ENCODE measurements at regions of chr4 and their contacts with region 1.

Region 1: GRCh38 chr4:182806259-182807252 is 110.6 kb downstream of the DCTD start:
- DNase-seq: peak; percentile 50
- H3K4me3 Mint-ChIP-seq: peak overlapping the region; percentile 62
- H3K27ac Mint-ChIP-seq: no peak overlapping the region
- H3K4me1 Mint-ChIP-seq: no peaks in the 10 kb centered on the region
- H3K27me3 Mint-ChIP-seq: peaks cover 16% of the 10 kb centered on the region

Region 2: DNA sequence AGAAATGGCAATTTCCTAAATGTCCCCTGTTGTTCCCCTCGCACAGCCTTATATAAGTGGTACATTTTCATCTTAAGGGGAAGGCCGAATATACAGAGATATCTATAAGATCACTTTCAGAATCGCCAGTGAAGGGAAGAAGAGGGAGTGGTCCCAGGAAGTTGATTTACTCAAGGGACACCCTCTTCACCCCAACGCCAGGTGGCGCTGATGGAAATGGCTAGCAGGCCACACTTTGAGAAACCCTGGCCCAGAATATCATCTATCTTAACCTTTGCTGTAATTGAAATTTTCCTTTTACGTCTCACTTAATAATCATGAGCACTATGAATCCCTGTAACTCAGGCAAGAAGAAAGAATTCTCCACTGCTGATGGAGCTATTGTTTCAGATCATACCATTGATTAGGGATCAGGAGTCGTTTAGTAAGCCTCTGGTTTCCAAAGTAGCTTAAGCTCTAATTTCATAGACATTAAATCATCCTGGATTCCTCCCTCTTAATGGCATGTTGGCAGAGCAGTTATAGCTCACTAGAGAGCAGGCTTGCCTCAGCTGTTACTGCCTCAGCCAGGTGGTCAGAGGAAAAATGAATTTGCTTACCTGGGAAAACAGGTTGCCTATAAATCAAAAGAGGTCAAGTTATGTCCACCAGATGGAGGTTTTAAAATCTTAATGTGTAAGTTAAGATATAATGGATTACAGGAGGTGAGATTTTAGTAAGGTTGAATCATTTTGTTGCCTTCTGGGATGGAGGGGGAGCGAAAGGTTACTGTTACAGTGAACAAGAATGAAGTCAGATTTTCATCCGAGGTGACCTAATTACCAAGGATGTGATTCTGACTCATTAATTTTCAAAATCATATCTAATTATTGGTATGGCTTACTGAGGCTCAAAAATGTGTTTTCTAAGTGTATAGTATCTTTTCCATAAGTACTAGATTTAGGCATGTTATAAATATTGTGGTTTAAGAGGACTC is 1504.5 kb before region 1 on chr4:
- intact Hi-C with region 1: loop called (anchors 5 kb)
- DNase-seq: no peak
- H3K4me3 Mint-ChIP-seq: no peak overlapping the region
- H3K27ac Mint-ChIP-seq: no peak overlapping the region
- H3K4me1 Mint-ChIP-seq: no peaks in the 10 kb centered on the region
- H3K27me3 Mint-ChIP-seq: no peaks in the 10 kb centered on the region

Region 3: DNA sequence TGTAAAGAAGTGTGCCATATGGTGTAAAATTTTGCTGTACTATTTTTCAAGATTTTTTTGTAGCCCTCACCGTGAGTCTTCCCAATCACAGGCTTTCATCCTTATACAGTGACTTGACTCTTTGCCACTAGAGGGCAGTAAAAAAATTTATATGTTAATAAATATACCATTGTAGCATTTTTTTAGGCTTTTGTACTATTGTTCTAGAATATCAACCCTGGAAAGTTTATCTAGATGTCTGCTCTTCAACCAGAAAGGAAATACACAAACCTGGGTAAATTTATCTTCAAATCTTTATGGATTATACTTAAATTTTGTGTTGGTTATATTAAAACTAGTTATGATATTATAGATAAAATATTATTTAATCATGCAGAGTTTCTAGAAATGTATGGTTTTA is 328.1 kb before region 1 on chr4:
- intact Hi-C with region 1: loop called (anchors 1 kb)
- DNase-seq: no peak
- H3K4me3 Mint-ChIP-seq: no peak overlapping the region
- H3K27ac Mint-ChIP-seq: no peak overlapping the region
- H3K4me1 Mint-ChIP-seq: no peaks in the 10 kb centered on the region
- H3K27me3 Mint-ChIP-seq: no peaks in the 10 kb centered on the region

Region 4: DNA sequence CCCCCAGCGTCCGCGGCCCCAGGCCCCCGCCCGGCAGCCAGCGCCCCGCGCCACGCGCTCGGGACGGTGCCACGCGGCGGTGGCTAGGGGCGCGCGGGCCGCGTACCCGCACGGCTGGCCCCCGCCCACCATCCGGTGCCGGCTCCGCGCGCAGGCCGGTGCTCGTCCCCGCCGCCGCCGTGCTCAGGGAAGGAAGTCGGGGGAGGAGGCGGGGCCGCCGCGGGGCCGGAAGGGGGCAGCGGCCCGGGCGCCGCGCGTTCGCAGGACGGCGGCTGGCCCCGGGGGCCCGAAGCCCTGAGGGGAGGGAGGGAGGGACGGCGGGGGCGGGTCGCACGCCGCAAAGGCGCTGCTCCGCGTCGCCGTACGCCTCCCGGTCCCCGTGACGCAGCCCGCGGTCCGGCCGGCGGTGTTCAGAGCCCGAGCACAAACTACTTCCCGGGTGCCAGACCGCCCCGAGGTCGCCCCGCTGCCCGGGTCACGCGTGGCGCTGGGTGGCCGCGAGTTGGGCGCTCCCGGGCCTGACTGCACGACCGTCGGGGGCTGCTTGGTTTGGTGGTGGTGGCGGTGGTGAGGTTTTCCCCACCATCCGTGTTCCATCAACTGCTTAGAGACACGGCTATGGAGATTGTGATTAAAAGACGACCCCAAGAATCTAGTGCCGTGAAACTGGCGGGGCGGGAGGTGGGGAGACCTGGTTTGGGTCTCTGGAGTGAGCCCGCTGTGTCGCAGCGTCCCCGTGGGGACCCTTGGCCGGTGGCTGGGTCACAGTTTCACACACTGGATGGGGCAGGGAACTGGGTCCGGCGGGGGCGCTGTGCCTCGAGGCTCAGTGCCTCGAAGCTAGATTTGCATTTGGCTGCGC is 110.9 kb after region 1 on chr4 and contains the start of gene DCTD:
- intact Hi-C with region 1: loop called (anchors 2 kb)
- DNase-seq: peak; percentile 78
- H3K4me3 Mint-ChIP-seq: peak within 1 kb of the TSS; percentile 92
- H3K27ac Mint-ChIP-seq: peak within 1 kb of the TSS; percentile 97
- H3K4me1 Mint-ChIP-seq: peaks cover 50% of the 10 kb centered on the region
- H3K27me3 Mint-ChIP-seq: peaks cover 10% of the 10 kb centered on the region
- total RNA-seq, gene DCTD: 122 and 131 TPM in 2 replicates

Region 5: GRCh38 chr4:183261953-183262775 is 455.6 kb after region 1 on chr4:
- intact Hi-C with region 1: loop called (anchors 1 kb)
- DNase-seq: peak; percentile 56
- H3K4me3 Mint-ChIP-seq: no peak overlapping the region
- H3K27ac Mint-ChIP-seq: no peak overlapping the region
- H3K4me1 Mint-ChIP-seq: peaks cover 7% of the 10 kb centered on the region
- H3K27me3 Mint-ChIP-seq: peaks cover 5% of the 10 kb centered on the region

Region 6: DNA sequence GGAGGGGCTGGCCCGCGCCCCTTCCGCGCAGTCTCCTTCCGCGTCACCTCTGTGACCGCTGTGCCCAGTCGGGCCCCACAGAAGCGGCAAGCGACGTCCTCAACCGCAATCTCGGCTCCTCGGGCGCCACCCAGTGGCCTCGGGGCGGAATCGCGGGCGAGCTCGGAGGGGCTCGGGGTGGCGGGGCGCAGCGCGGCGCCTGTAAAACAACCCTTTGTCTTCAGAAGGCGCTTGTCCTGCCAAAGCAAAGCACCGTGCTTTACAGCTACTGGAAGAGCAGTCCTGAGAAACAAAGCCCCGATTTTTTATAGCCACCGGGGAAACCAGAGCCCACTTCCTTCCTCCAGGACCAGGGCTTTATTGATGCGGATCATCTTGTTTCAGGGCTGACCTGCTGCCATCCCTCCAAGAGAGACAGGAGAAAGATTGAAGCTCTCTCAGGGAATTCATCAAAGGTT is 600.6 kb after region 1 on chr4:
- intact Hi-C with region 1: loop called (anchors 10 kb)
- DNase-seq: peak; percentile 82
- H3K4me3 Mint-ChIP-seq: peak overlapping the region; percentile 81
- H3K27ac Mint-ChIP-seq: no peak overlapping the region
- H3K4me1 Mint-ChIP-seq: peaks cover 8% of the 10 kb centered on the region
- H3K27me3 Mint-ChIP-seq: peaks cover 10% of the 10 kb centered on the region

Measured in activated T-helper 1 cell treated with anti-CD3 and anti-CD28 coated beads, Interleukin-12 subunit alpha, Interleukin-12 subunit beta, Interleukin-2, Interleukin-4 antibody, amounts not matched to agents 30 ng/mL and 10 ng/mL and 1 ng/mL, durations not matched to agents 14 hours and 24 hours and 36 hours (primary cell).